HCT116 (cell line): ENCODE measurements at regions of chr2 and their contacts with region 1.

Region 1: DNA sequence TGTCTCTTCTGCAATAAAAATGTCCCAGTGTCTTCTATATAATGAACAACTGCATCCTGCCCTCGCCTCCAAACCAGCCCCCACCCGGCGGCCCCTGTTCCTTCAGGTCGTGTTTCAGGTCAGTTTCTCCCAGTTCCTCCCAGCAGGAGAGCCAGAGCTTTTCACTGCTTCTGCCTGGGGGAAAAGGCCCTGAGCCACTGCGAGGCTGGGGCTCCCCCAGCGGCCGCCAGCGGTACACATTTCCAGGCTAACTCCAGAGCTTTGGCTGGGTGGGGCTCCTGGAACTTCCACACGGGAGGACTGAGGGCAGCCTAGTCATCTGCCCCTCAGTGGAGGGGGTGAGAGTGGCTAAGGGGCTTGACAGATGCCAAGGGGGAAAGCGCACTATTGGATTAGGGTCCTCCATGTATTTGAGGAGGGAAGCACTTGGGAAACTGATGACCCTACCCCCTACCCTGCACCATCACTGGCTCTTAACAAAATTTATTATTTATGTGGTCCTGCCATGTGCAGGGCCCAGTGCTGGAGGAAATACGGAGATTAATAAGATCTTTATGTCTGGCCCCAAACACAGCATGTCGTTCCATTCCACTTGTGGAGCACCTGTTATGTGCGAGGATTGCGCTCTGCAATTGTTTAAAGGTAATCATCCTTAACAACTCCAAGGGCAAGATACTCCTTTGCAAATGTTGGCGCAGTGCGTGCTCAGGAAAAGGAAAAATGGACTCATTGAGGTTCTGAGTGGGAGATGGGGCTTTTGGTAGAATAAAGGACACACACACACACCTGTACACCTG is 17.3 kb upstream of the CYS1 start:
- DNase-seq: no peak
- ATAC-seq: peak; percentile 99
- H3K4me3 ChIP-seq: no peak overlapping the region
- H3K27ac ChIP-seq: no peak overlapping the region
- H3K4me1 ChIP-seq: peaks cover 3 to 19% of the 10 kb centered on the region in 2 experiments; a peak in 3 of 4 replicates
- H3K27me3 ChIP-seq: no peaks in the 10 kb centered on the region
- CTCF ChIP-seq: peak; percentile 90 to 96 (median 94)
- POLR2A ChIP-seq: no peak
- RAD21 ChIP-seq: peak; percentile 83

Region 2: GRCh38 chr2:9538000-9538507 is 559.5 kb before region 1 on chr2:
- CTCF ChIA-PET with region 1: no interaction called
- POLR2A ChIA-PET with region 1: no interaction called
- RAD21 ChIA-PET with region 1: no interaction called
- intact Hi-C with region 1: no loop called
- DNase-seq: no peak
- ATAC-seq: no peak
- H3K4me3 ChIP-seq: no peak overlapping the region
- H3K27ac ChIP-seq: no peak overlapping the region
- H3K4me1 ChIP-seq: peaks cover 0 to 11% of the 10 kb centered on the region in 2 experiments; a peak in 2 of 4 replicates
- H3K27me3 ChIP-seq: no peaks in the 10 kb centered on the region
- CTCF ChIP-seq: no peak
- POLR2A ChIP-seq: no peak
- RAD21 ChIP-seq: no peak

Region 3: GRCh38 chr2:10057231-10058107 is 40.1 kb before region 1 on chr2:
- CTCF ChIA-PET with region 1: interaction called, 11 read pairs
- POLR2A ChIA-PET with region 1: no interaction called
- RAD21 ChIA-PET with region 1: interaction called in 1 of 2 experiments, 3 read pairs
- intact Hi-C with region 1: no loop called
- DNase-seq: no peak
- ATAC-seq: peak; percentile 96
- H3K4me3 ChIP-seq: peak overlapping the region; percentile 39 to 50
- H3K27ac ChIP-seq: peak overlapping the region; percentile 54
- H3K4me1 ChIP-seq: peaks cover 17 to 20% of the 10 kb centered on the region in 2 experiments
- H3K27me3 ChIP-seq: no peaks in the 10 kb centered on the region
- CTCF ChIP-seq: no peak
- POLR2A ChIP-seq: no peak
- RAD21 ChIP-seq: no peak

Region 4: GRCh38 chr2:10079234-10079869 is 18.2 kb before region 1 on chr2:
- CTCF ChIA-PET with region 1: interaction called, 91 read pairs
- POLR2A ChIA-PET with region 1: no interaction called
- RAD21 ChIA-PET with region 1: interaction called, 3 read pairs
- intact Hi-C with region 1: no loop called
- DNase-seq: no peak
- ATAC-seq: peak; percentile 69
- H3K4me3 ChIP-seq: peak overlapping the region; percentile 45 to 60
- H3K27ac ChIP-seq: peak overlapping the region; percentile 46; the same call in 1 of the 2 replicates
- H3K4me1 ChIP-seq: peaks cover 6 to 13% of the 10 kb centered on the region in 2 experiments
- H3K27me3 ChIP-seq: 0 out of 2 replicates have a peak, but pooled peaks cover under 1% of the 10 kb centered on the region
- CTCF ChIP-seq: no peak
- POLR2A ChIP-seq: no peak
- RAD21 ChIP-seq: no peak